Left colon (tissue), 2 donors: ENCODE measurements at regions of chr5 and their contacts with region 1.

Region 1: DNA sequence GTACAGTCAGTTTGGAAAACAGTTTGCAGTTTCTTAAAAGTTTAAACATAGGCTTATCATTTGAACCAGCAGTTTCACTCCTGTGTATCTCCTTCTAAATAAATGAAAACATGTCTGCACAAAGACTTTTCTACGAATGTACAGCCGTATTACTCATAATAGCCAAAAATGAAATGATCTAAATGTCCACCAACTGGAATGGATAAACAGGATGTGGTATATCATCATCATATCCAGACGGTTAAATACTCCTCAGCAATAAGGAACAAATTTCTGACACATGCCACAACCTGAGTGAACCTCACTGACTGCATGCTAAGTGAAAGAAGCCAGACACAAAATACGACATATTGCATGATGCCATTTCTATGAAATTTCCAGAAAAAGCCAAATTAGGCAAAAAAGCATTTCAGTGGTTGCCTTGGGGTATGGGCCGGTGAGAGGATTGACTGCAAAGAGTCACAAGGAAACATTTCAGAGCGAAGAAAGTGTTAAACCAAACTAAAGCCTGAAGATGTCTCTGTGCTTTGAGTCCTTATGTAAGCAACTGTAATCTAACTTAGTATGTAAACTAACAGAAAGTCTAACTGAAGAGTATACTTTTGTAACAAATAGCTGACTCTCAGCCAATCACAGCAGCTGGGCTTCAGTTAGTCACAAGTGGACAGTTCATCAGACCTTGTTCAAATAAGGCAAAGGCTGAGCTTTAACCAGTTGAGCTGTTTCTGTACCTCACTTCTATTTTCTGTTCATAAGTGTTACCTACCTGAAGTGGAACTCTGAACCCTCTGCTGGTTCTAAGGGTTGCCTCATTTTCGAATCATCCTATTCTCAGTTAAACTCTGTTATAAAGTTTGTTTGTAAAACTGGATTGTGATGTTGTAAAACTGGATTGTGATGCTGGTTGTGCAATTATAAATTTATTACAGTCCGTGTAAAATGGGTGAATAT is 65.2 kb downstream of the TRIO start:
- DNase-seq: peak in 1 of 2 donors; percentile 41
- ATAC-seq: peak; percentile 60

Region 2: DNA sequence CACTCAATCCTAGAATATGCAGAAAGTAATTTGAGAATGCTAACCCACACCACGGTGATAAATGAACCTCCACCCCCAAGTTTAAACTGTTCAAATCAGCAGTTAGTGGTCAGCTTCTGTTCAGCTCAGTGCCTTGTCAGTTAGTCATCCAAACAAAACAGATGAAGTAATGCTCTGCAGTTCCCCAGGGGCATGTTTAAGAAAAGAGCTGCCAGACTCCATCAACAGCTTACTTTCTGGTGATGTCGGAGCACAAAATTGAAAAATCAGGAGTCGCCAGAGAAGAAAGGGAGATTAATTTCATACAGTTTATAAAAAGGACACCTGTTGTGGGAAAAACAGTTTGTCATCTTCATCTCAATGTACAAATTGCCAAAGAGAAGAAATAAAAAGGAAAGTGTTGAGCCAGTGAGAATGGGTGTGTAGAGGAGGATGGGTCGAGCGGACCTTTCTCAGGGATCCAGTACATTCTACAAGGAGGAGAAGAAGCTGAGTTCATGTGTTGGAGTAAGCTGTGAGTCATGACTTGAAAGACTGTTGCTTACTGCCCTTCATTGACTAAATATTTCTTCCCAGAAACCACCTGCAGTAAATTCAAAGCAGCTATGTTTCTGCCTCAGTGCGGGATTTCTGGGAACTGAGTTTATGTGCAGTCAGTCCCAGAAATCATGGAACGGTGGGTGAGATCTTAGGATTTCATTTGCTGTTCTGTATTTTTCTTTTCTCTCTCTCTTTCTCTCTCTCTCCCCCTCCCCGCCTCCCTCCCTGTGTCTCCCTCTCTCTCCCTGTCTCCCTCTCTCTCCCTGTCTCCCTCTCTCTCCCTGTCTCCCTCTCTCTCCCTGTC is 51.5 kb before region 1 on chr5:
- intact Hi-C with region 1: loop called in 1 of 2 experiments (anchors 10 kb)
- DNase-seq: no peak
- ATAC-seq: no peak

Region 3: GRCh38 chr5:14270209-14270702 is 61.9 kb after region 1 on chr5:
- intact Hi-C with region 1: no loop called
- DNase-seq: no peak
- ATAC-seq: peak; percentile 79